Mammary epithelial cell (primary cell): ENCODE measurements at regions of chr3 and their contacts with region 1.

Region 1: DNA sequence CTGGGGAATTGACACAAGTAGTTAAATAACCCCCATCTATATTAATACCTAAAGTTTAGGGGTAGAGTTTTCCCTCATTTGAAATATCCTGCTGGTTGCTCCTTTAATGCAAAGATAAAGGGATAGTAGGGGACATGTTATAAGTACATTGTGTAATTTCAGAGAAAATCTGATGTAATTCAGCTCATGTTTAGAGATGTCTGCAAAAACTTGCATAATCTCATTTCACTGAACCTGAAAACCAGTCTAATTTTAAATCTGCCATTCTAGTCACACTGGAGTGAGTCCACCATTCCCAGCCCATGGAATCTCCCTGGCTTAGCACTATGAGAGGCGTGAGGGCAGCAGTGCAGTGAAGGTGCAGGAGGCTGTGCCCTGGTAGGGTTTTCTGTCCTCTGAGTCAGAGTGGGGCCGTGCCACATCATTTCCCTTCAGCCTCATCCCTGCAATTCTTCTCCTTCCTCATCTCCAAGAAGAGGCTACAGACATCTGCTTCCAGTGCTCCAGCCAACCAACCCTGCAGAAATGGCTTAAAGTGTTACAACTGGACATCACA is 246.3 kb upstream of the UMPS start:
- DNase-seq: peak; percentile 25
- H3K4me3 ChIP-seq: no peak overlapping the region
- H3K27ac ChIP-seq: no peak overlapping the region
- H3K4me1 ChIP-seq: no peaks in the 10 kb centered on the region
- H3K27me3 ChIP-seq: peaks cover 2% of the 10 kb centered on the region
- CTCF ChIP-seq: no peak

Region 2: DNA sequence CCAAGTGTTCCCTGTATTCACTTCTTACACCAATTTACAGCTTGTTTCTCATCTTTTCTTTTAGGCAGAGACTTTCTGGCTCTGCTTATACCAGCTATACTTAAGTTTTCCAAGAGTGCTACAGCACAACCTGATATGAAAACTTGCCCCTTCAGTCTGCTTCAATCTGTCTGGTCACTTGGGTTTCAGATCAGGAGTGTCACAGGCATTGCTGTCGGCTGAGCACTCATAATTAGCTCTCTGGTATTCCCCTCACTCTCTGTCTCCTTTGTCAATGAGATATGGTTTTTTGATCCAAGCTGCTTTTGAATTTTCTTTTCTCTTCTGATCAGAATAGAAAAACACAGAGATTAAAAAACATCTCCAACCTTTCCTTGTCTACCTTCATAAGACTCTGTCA is 51.3 kb after region 1 on chr3:
- CTCF ChIA-PET with region 1: no interaction called
- dilution Hi-C with region 1: loop called (anchors 5 kb)
- in situ Hi-C with region 1: no loop called
- intact Hi-C with region 1: no loop called
- DNase-seq: no peak
- H3K4me3 ChIP-seq: no peak overlapping the region
- H3K27ac ChIP-seq: no peak overlapping the region
- H3K4me1 ChIP-seq: peaks cover 23% of the 10 kb centered on the region
- H3K27me3 ChIP-seq: no peaks in the 10 kb centered on the region
- CTCF ChIP-seq: no peak

Region 3: GRCh38 chr3:126475413-126476114 is 1991.6 kb after region 1 on chr3 and contains the start of gene ZXDC:
- CTCF ChIA-PET with region 1: no interaction called
- dilution Hi-C with region 1: no loop called
- in situ Hi-C with region 1: no loop called
- intact Hi-C with region 1: no loop called
- DNase-seq: peak; percentile 93
- H3K4me3 ChIP-seq: peak within 1 kb of the TSS; percentile 78 to 83 (median 80)
- H3K27ac ChIP-seq: peak within 1 kb of the TSS; percentile 69
- H3K4me1 ChIP-seq: peaks cover 34% of the 10 kb centered on the region
- H3K27me3 ChIP-seq: no peaks in the 10 kb centered on the region
- CTCF ChIP-seq: peak; percentile 9 to 60
- total RNA-seq, gene ZXDC: 27.2 to 30.3 TPM